CD4-positive, alpha-beta T cell (primary cell): ENCODE measurements at regions of chr20 and their contacts with region 1.

Region 1: GRCh38 chr20:63641792-63642544 is 11.3 kb downstream of the STMN3 start:
- DNase-seq: peak; percentile 97 to 100 (median 98)
- ATAC-seq: peak; percentile 60
- H3K4me3 ChIP-seq: peak overlapping the region; percentile 91
- H3K4me3 Mint-ChIP-seq: peak overlapping the region; percentile 88
- H3K27ac ChIP-seq: peak overlapping the region; percentile 68 to 87
- H3K27ac Mint-ChIP-seq: peak overlapping the region; percentile 94
- H3K4me1 ChIP-seq: peaks cover 44% of the 10 kb centered on the region
- H3K4me1 Mint-ChIP-seq: peaks cover 35% of the 10 kb centered on the region
- H3K27me3 ChIP-seq: no peaks in the 10 kb centered on the region
- H3K27me3 Mint-ChIP-seq: peaks cover 4% of the 10 kb centered on the region
- CTCF ChIP-seq: peak; percentile 48

Region 2: GRCh38 chr20:62368976-62369814 is 1272.8 kb before region 1 on chr20:
- CTCF ChIA-PET with region 1: no interaction called
- POLR2A ChIA-PET with region 1: no interaction called
- intact Hi-C with region 1: no loop called
- DNase-seq: no peak
- ATAC-seq: no peak
- H3K4me3 ChIP-seq: no peak overlapping the region
- H3K4me3 Mint-ChIP-seq: no peak overlapping the region
- H3K27ac ChIP-seq: no peak overlapping the region
- H3K27ac Mint-ChIP-seq: no peak overlapping the region
- H3K4me1 ChIP-seq: peaks cover 26% of the 10 kb centered on the region
- H3K4me1 Mint-ChIP-seq: peaks cover 4% of the 10 kb centered on the region
- H3K27me3 ChIP-seq: peaks cover 42 to 43% of the 10 kb centered on the region in 2 experiments
- H3K27me3 Mint-ChIP-seq: peaks cover 27% of the 10 kb centered on the region
- CTCF ChIP-seq: no peak

Region 3: DNA sequence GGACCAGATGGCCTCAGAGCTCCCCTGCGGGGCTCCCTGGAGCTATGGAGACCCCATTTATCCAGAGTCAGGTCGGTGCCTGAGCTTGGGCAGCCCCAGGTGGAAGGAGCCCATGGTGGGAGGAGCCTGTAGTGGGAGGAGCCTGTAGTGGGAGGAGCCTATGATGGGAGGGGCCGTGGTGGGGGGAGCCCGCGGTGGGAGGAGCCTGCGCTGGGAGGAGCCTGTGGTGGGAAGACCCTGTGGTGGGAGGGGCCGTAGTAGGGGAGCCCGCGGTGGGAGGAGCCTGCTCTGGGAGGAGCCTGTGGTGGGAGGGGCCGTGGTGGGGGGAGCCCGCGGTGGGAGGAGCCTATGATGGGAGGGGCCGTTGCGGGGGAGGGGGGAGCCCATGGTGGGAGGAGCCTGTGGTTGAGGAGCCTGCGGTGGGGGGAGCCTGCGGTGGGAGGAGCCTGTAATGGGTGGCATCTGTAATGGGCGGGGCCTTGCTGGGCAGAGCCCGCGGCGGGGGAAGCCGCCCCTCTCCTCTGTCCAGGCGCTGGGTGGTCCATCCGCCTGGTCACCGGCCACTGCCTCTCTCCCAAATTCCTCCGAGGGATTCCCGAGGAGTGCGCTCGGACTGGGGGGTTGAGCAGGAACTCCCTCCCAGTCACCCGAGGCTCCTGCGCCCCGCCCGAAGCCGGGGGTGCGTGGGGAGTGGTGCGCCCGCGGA is 88.6 kb before region 1 on chr20:
- CTCF ChIA-PET with region 1: interaction called, 7 read pairs
- POLR2A ChIA-PET with region 1: interaction called, 21 read pairs
- intact Hi-C with region 1: no loop called
- DNase-seq: peak; percentile 74 to 96 (median 90)
- ATAC-seq: peak; percentile 83
- H3K4me3 ChIP-seq: peak overlapping the region; percentile 68
- H3K4me3 Mint-ChIP-seq: peak overlapping the region; percentile 90
- H3K27ac ChIP-seq: peak overlapping the region; percentile 73 to 82
- H3K27ac Mint-ChIP-seq: peak overlapping the region; percentile 91
- H3K4me1 ChIP-seq: peaks cover 39% of the 10 kb centered on the region
- H3K4me1 Mint-ChIP-seq: peaks cover 18% of the 10 kb centered on the region
- H3K27me3 ChIP-seq: peaks cover 3 to 4% of the 10 kb centered on the region in 2 experiments
- H3K27me3 Mint-ChIP-seq: no peaks in the 10 kb centered on the region
- CTCF ChIP-seq: no peak

Region 4: GRCh38 chr20:63580796-63581461 is 61.0 kb before region 1 on chr20:
- CTCF ChIA-PET with region 1: interaction called, 8 read pairs
- POLR2A ChIA-PET with region 1: interaction called, 10 read pairs
- intact Hi-C with region 1: loop called (anchors 1 to 2 kb)
- DNase-seq: peak; percentile 62 to 87 (median 76)
- ATAC-seq: peak; percentile 99
- H3K4me3 ChIP-seq: no peak overlapping the region
- H3K4me3 Mint-ChIP-seq: no peak overlapping the region
- H3K27ac ChIP-seq: no peak overlapping the region
- H3K27ac Mint-ChIP-seq: peak overlapping the region; percentile 19
- H3K4me1 ChIP-seq: peaks cover 10% of the 10 kb centered on the region
- H3K4me1 Mint-ChIP-seq: peaks cover 20% of the 10 kb centered on the region
- H3K27me3 ChIP-seq: no peaks in the 10 kb centered on the region
- H3K27me3 Mint-ChIP-seq: no peaks in the 10 kb centered on the region
- CTCF ChIP-seq: peak; percentile 63

Region 5: DNA sequence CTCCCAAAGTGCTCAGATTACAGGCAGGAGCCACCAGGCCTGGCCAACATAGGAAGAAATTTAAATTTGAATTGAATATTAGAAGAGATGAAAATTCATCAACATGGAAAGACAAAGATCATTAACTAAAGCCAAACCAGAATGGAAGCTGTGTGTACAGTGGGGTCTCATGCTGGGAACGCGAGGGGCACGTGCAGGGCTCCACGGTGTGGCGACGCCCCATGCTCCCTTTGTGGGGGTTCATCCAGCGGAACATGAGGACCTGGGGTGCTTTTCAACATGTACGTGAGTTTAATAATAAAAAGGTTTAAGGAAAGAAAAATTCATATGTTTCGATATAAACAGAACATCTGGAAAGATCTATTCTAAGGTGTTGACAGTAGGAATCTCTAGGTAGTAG is 26.4 kb before region 1 on chr20:
- CTCF ChIA-PET with region 1: interaction called, 4 read pairs
- POLR2A ChIA-PET with region 1: interaction called, 449 read pairs
- intact Hi-C with region 1: loop called in 1 of 2 experiments (anchors 2 kb)
- DNase-seq: no peak
- ATAC-seq: no peak
- H3K4me3 ChIP-seq: no peak overlapping the region
- H3K4me3 Mint-ChIP-seq: no peak overlapping the region
- H3K27ac ChIP-seq: no peak overlapping the region
- H3K27ac Mint-ChIP-seq: no peak overlapping the region
- H3K4me1 ChIP-seq: peaks cover 6% of the 10 kb centered on the region
- H3K4me1 Mint-ChIP-seq: peaks cover under 1% of the 10 kb centered on the region
- H3K27me3 ChIP-seq: no peaks in the 10 kb centered on the region
- H3K27me3 Mint-ChIP-seq: no peaks in the 10 kb centered on the region
- CTCF ChIP-seq: no peak

Region 6: GRCh38 chr20:63652168-63653077 is 10.5 kb after region 1 on chr20:
- CTCF ChIA-PET with region 1: interaction called, 11 read pairs
- POLR2A ChIA-PET with region 1: interaction called, 32 read pairs
- intact Hi-C with region 1: no loop called
- DNase-seq: peak in 10 of 14 experiments; percentile 22 to 76 (median 47)
- ATAC-seq: peak; percentile 51
- H3K4me3 ChIP-seq: peak overlapping the region; percentile 70
- H3K4me3 Mint-ChIP-seq: peak overlapping the region; percentile 97
- H3K27ac ChIP-seq: peak overlapping the region in 1 of 2 donors; percentile 38
- H3K27ac Mint-ChIP-seq: peak overlapping the region; percentile 88
- H3K4me1 ChIP-seq: peaks cover 46% of the 10 kb centered on the region
- H3K4me1 Mint-ChIP-seq: peaks cover 22% of the 10 kb centered on the region
- H3K27me3 ChIP-seq: no peaks in the 10 kb centered on the region
- H3K27me3 Mint-ChIP-seq: no peaks in the 10 kb centered on the region
- CTCF ChIP-seq: peak; percentile 12

Region 7: GRCh38 chr20:63739130-63740069 is 97.4 kb after region 1 on chr20 and contains the start of gene SLC2A4RG:
- CTCF ChIA-PET with region 1: interaction called, 5 read pairs
- POLR2A ChIA-PET with region 1: interaction called, 29 read pairs
- intact Hi-C with region 1: no loop called
- DNase-seq: peak in 11 of 14 experiments; percentile 49 to 90 (median 72)
- ATAC-seq: peak; percentile 8
- H3K4me3 ChIP-seq: peak within 1 kb of the TSS; percentile 92
- H3K4me3 Mint-ChIP-seq: peak within 1 kb of the TSS; percentile 80
- H3K27ac ChIP-seq: peak within 1 kb of the TSS; percentile 34 to 53
- H3K27ac Mint-ChIP-seq: no peak within 1 kb of the TSS
- H3K4me1 ChIP-seq: peaks cover 56% of the 10 kb centered on the region
- H3K4me1 Mint-ChIP-seq: peaks cover 16% of the 10 kb centered on the region
- H3K27me3 ChIP-seq: no peaks in the 10 kb centered on the region
- H3K27me3 Mint-ChIP-seq: no peaks in the 10 kb centered on the region
- CTCF ChIP-seq: no peak
- total RNA-seq, gene SLC2A4RG: 123 to 125 TPM